ENCODE measurements at regions of chr2 and their contacts with region 1.

Region 1: GRCh38 chr2:177604271-177605065 is 211.9 kb downstream of the AGPS start:
- DNase-seq: peak; percentile 76
- ATAC-seq: peak; percentile 96
- H3K4me3 ChIP-seq: no peak overlapping the region
- H3K27ac ChIP-seq: no peak overlapping the region
- H3K4me1 ChIP-seq: peaks cover 4% of the 10 kb centered on the region; the same call in 1 of the 2 replicates
- H3K27me3 ChIP-seq: no peaks in the 10 kb centered on the region
- CTCF ChIP-seq: peak; percentile 87

Region 2: GRCh38 chr2:177338177-177338721 is 266.2 kb before region 1 on chr2:
- CTCF ChIA-PET with region 1: no interaction called
- POLR2A ChIA-PET with region 1: no interaction called
- intact Hi-C with region 1: loop called (anchors 2 kb)
- DNase-seq: peak; percentile 88
- ATAC-seq: peak; percentile 89
- H3K4me3 ChIP-seq: no peak overlapping the region; the same call in 1 of the 2 replicates
- H3K27ac ChIP-seq: peak overlapping the region; percentile 60
- H3K4me1 ChIP-seq: peaks cover 24% of the 10 kb centered on the region
- H3K27me3 ChIP-seq: no peaks in the 10 kb centered on the region
- CTCF ChIP-seq: no peak

Region 3: DNA sequence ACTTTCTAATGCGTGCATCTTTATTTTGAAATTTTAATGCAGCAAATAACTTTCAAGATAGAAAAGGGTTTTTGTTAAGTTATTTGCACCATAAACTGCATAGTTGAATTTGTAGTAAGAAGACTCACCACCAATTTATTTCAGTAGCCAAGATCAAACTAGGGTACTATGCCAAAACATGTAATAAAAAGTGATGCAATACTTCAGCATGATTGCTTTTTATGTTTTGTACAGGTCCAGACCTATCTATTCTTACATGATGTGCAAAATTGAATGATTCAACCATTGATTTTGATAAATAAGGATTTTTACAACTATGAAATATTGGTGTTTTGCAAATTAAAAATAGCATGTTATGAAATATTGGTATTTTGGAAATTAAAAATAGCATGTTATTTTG is 185.2 kb before region 1 on chr2:
- CTCF ChIA-PET with region 1: no interaction called
- POLR2A ChIA-PET with region 1: no interaction called
- intact Hi-C with region 1: loop called (anchors 5 kb)
- DNase-seq: peak; percentile 28
- ATAC-seq: no peak
- H3K4me3 ChIP-seq: no peak overlapping the region
- H3K27ac ChIP-seq: no peak overlapping the region
- H3K4me1 ChIP-seq: peaks cover 9% of the 10 kb centered on the region; the same call in 1 of the 2 replicates
- H3K27me3 ChIP-seq: no peaks in the 10 kb centered on the region
- CTCF ChIP-seq: no peak

Region 4: GRCh38 chr2:177489719-177490301 is 114.7 kb before region 1 on chr2:
- CTCF ChIA-PET with region 1: interaction called, 25 read pairs
- POLR2A ChIA-PET with region 1: no interaction called
- intact Hi-C with region 1: loop called (anchors 1 kb)
- DNase-seq: peak; percentile 56
- ATAC-seq: peak; percentile 49
- H3K4me3 ChIP-seq: no peak overlapping the region
- H3K27ac ChIP-seq: no peak overlapping the region
- H3K4me1 ChIP-seq: no peaks in the 10 kb centered on the region
- H3K27me3 ChIP-seq: no peaks in the 10 kb centered on the region
- CTCF ChIP-seq: peak; percentile 85

Region 5: GRCh38 chr2:177501186-177501585 is 103.3 kb before region 1 on chr2:
- CTCF ChIA-PET with region 1: no interaction called
- POLR2A ChIA-PET with region 1: no interaction called
- intact Hi-C with region 1: no loop called
- DNase-seq: no peak
- ATAC-seq: no peak
- H3K4me3 ChIP-seq: no peak overlapping the region
- H3K27ac ChIP-seq: no peak overlapping the region
- H3K4me1 ChIP-seq: no peaks in the 10 kb centered on the region
- H3K27me3 ChIP-seq: no peaks in the 10 kb centered on the region
- CTCF ChIP-seq: no peak

Region 6: DNA sequence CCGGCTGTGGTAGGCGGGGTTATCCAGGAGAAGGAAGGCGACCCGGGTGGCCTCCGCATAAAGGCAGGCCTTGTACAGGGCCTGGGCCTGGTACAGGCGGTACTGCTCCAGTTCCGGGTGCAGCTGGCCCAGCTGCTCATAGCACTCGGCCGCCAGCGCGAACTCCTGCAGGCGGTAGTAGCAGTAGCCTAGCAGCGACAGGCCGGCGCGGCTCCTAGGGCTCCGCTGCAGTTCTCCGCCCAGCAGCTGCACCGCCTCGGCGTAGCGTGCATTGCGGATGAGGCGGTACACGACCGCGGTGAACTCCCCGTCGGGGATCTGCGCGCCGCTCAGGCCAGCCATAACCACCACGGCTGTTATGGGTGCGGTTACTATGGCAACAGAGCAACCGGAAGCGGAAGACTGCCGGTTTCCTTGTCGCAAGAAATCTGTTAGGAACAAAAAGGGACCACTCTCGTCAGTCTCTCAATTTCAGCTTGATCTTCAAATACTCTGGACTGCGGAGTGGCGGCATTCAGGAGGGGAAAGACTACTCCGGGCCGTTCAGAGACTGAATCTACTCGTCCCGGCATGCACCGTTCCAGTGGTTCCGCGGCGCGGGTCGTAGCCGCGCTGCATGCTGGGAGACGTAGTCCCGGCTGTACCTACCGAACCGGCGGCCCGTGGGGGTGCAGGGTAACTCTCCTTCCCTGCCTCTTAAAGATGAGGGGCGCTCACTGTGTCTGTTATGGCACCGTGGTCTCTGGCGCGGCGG is 51.9 kb before region 1 on chr2:
- CTCF ChIA-PET with region 1: no interaction called
- POLR2A ChIA-PET with region 1: no interaction called
- intact Hi-C with region 1: loop called (anchors 1 kb)
- DNase-seq: peak; percentile 82
- ATAC-seq: peak; percentile 96
- H3K4me3 ChIP-seq: peak overlapping the region; percentile 94
- H3K27ac ChIP-seq: peak overlapping the region; percentile 89
- H3K4me1 ChIP-seq: peaks cover 5% of the 10 kb centered on the region; the same call in 1 of the 2 replicates
- H3K27me3 ChIP-seq: no peaks in the 10 kb centered on the region
- CTCF ChIP-seq: no peak